ENCODE measurements at regions of chr17 and their contacts with region 1.

Region 1: DNA sequence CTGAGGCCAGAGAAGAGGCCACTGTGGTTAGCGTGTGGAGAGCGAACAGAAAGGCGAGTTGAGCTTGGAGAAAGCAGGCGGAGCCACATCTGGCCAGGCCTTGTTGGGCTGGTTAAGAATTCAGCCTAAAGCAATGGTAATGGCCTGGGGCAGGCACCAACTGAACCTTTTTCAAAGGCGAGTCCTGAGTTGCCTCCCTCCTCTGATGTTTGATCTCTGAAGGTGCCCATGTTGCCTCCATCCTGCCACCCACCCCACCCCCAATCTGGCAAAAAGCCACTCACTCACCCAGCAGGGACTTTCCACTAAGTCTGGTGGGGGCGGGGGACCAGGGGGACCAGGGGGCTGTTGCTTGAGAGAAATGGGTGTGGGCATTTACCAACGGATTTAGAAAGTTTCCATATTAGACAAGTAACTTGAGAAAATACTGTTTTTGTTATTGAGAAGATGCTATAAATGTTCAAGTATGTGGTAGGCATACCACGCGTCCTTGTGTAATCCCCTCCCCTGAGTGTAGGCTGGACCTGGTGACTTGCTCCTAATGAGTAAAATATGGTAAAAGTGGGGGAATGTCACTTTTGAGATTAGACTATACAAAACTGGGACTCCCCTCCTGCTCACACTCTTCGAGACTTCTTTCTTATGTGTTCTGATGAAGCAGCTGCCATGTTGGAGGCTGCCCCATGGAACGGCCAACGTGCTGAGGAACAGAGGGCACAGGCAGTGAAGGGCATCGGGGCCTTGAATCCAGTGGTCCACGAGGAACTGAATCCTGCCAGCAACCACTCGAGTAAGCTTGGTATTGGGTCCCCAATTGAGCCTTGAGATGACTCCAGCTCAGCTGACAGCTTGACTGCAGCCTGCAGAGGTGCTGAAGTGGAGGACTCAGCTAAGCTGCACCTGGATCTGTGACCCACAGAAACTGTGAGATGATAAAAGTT is 29.9 kb upstream of the TNS4 start:
- DNase-seq: peak in 1 of 2 donors; percentile 16
- H3K4me3 ChIP-seq: no peak overlapping the region
- H3K27ac ChIP-seq: peak overlapping the region in 1 of 2 donors; percentile 8
- H3K4me1 ChIP-seq: peaks cover 0 to 32% (median 24%) of the 10 kb centered on the region in 4 donors
- H3K27me3 ChIP-seq: no peaks in the 10 kb centered on the region
- CTCF ChIP-seq: no peak

Region 2: GRCh38 chr17:40443583-40444327 is 87.6 kb before region 1 on chr17:
- intact Hi-C with region 1: loop called (anchors 5 kb)
- DNase-seq: peak; percentile 79 to 92
- H3K4me3 ChIP-seq: peak overlapping the region; percentile 59 to 67
- H3K27ac ChIP-seq: peak overlapping the region; percentile 94
- H3K4me1 ChIP-seq: peaks cover 0 to 61% (median 48%) of the 10 kb centered on the region in 4 donors
- H3K27me3 ChIP-seq: no peaks in the 10 kb centered on the region
- CTCF ChIP-seq: peak; percentile 35 to 50

Region 3: GRCh38 chr17:40479533-40480480 is 51.5 kb before region 1 on chr17:
- intact Hi-C with region 1: loop called (anchors 5 kb)
- DNase-seq: no peak
- H3K4me3 ChIP-seq: no peak overlapping the region
- H3K27ac ChIP-seq: no peak overlapping the region
- H3K4me1 ChIP-seq: peaks cover 0 to 9% (median 5%) of the 10 kb centered on the region in 4 donors
- H3K27me3 ChIP-seq: no peaks in the 10 kb centered on the region
- CTCF ChIP-seq: no peak

Region 4: DNA sequence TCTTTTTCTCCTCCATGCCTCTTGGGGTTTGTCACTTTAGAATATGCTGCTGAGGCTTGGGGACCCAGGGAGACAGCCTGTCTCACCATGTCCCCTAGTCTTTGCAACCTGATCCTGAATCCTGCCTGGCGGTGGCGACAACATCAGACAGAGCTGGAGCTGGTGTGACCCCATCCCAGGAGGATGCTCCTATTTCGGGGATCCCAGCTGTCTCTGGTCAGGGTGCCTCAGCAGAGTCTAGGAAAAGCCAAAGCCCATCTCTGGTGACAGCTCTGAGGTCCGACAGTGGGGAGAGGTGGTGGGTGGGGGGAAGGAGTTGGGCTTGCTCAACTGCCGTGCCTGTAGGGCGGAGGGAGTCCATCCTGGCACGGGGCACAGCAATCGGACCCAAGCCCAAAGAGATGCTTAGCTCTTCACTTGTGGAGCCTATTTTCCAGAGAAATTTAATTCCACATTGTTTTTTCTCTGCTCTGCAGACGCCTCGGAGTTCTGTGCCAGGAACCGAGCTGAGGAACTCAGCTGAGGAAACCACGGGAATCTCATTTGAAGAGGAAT is 19.6 kb before region 1 on chr17:
- intact Hi-C with region 1: loop called (anchors 1 kb)
- DNase-seq: peak in 1 of 2 donors; percentile 42
- H3K4me3 ChIP-seq: no peak overlapping the region
- H3K27ac ChIP-seq: no peak overlapping the region
- H3K4me1 ChIP-seq: peaks cover 0 to 10% (median 3%) of the 10 kb centered on the region in 4 donors
- H3K27me3 ChIP-seq: no peaks in the 10 kb centered on the region
- CTCF ChIP-seq: no peak

Measured in tibial artery (tissue), 4 donors.